T-cell (primary cell): ENCODE measurements at regions of chr16 and their contacts with region 1.

Region 1: GRCh38 chr16:72961121-72961763 is 86.7 kb downstream of the ZFHX3 start:
- DNase-seq: no peak
- ATAC-seq: no peak
- H3K4me3 ChIP-seq: no peak overlapping the region
- H3K4me3 Mint-ChIP-seq: no peak overlapping the region
- H3K27ac ChIP-seq: no peak overlapping the region
- H3K27ac Mint-ChIP-seq: no peak overlapping the region
- H3K4me1 ChIP-seq: no peaks in the 10 kb centered on the region
- H3K4me1 Mint-ChIP-seq: no peaks in the 10 kb centered on the region
- H3K27me3 ChIP-seq: no peaks in the 10 kb centered on the region
- H3K27me3 Mint-ChIP-seq: no peaks in the 10 kb centered on the region

Region 2: DNA sequence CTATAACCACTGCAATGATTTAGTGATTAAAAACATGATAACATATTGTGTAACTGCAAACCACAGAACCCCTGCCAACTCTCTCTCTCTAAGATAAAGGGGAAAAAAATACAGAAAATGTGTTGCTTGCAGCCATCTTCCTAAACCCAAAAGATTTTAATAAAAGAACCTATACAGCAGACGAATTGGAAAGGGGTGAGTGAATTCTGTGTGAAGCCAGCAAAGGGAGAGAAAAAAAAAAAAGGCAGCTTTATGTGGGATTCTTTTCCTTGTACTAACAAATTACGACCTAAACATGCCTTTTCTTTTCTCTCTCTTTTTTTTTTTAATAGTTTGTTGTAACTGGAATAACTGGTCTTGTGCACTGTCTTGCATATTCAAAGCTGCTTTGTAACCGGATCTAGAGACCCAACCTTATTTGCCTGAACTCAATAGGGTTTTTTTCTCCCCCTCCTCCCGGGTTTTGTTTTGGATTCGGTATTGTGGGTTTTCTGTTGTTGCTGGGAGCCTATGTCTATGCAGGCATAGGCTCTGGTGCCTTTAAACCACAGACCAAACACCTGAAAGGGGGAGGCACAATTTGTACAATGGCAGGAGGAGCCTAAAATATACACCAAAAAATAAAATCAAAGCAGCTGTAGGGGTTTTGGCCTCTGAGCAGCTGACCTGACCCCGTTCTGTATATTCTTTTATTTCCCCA is 93.7 kb after region 1 on chr16:
- CTCF ChIA-PET with region 1: interaction called in 1 of 2 experiments, 11 read pairs
- POLR2A ChIA-PET with region 1: no interaction called
- DNase-seq: no peak
- ATAC-seq: peak in 1 of 4 experiments; percentile 46
- H3K4me3 ChIP-seq: no peak overlapping the region
- H3K4me3 Mint-ChIP-seq: peak overlapping the region in 1 of 3 donors; percentile 92
- H3K27ac ChIP-seq: no peak overlapping the region
- H3K27ac Mint-ChIP-seq: peak overlapping the region in 1 of 2 donors; percentile 44
- H3K4me1 ChIP-seq: peaks cover 9 to 15% of the 10 kb centered on the region in 2 experiments
- H3K4me1 Mint-ChIP-seq: peaks cover 12 to 35% (median 26%) of the 10 kb centered on the region in 3 donors
- H3K27me3 ChIP-seq: peaks cover 10 to 24% of the 10 kb centered on the region in 2 experiments
- H3K27me3 Mint-ChIP-seq: peaks cover 36 to 43% of the 10 kb centered on the region in 2 donors